ENCODE measurements at regions of chr6 and their contacts with region 1.

Region 1: GRCh38 chr6:149925974-149926777 is 3.3 kb upstream of the RAET1G start:
- DNase-seq: peak; percentile 91 to 93
- ATAC-seq: peak; percentile 93 to 95 (median 94)
- H3K4me3 ChIP-seq: peak overlapping the region; percentile 65
- H3K27ac ChIP-seq: no peak overlapping the region
- H3K4me1 ChIP-seq: no peaks in the 10 kb centered on the region
- H3K27me3 ChIP-seq: peaks cover 0 to 23% (median 4%) of the 10 kb centered on the region in 3 donors
- CTCF ChIP-seq: peak; percentile 82

Region 2: DNA sequence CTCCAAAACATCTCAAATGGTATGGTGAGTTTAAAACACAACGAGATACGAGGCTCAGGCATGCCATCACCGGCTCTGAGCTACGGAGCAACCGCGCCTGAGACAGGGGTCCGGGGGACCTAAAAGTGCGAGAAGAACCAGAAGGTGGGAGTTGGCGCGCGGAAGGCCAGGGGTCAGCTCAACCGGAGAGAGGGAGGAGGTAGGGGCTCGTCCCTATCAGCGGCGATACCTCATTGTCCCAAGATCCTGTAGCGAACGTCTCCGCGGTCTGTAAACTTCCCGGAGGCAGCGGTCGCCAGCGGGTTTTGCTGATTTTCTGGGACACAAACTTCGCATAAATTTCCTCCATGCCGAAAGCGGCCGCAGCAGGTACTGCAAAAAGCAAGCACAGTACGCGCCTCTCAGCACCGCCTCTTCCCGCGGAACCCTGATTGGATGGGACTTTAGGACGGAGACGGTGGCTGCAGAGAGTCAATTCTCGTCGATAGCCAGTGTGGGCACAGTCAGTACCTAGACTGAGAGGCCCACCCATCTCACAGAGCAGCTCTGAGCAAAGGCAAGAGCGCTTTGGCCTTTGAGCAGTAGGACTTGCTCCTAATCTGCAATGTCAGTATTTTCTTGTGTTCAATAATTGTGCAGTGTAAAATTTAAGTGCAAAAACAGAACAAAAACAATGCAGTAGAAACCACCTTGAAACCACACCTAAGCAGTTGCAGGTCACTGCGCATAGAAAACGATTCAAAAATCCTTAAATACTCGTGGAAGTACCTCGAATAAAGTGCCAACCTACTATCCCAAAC is 179.8 kb before region 1 on chr6 and contains the start of gene NUP43:
- intact Hi-C with region 1: loop called in 1 of 2 experiments (anchors 10 kb)
- DNase-seq: peak; percentile 95 to 97
- ATAC-seq: peak; percentile 68 to 76 (median 71)
- H3K4me3 ChIP-seq: peak within 1 kb of the TSS; percentile 78
- H3K27ac ChIP-seq: peak within 1 kb of the TSS; percentile 73
- H3K4me1 ChIP-seq: peaks cover 18% of the 10 kb centered on the region
- H3K27me3 ChIP-seq: no peaks in the 10 kb centered on the region
- CTCF ChIP-seq: peak; percentile 64
- total RNA-seq, gene NUP43: 17.4 to 26.8 (median 22.1) TPM

Region 3: DNA sequence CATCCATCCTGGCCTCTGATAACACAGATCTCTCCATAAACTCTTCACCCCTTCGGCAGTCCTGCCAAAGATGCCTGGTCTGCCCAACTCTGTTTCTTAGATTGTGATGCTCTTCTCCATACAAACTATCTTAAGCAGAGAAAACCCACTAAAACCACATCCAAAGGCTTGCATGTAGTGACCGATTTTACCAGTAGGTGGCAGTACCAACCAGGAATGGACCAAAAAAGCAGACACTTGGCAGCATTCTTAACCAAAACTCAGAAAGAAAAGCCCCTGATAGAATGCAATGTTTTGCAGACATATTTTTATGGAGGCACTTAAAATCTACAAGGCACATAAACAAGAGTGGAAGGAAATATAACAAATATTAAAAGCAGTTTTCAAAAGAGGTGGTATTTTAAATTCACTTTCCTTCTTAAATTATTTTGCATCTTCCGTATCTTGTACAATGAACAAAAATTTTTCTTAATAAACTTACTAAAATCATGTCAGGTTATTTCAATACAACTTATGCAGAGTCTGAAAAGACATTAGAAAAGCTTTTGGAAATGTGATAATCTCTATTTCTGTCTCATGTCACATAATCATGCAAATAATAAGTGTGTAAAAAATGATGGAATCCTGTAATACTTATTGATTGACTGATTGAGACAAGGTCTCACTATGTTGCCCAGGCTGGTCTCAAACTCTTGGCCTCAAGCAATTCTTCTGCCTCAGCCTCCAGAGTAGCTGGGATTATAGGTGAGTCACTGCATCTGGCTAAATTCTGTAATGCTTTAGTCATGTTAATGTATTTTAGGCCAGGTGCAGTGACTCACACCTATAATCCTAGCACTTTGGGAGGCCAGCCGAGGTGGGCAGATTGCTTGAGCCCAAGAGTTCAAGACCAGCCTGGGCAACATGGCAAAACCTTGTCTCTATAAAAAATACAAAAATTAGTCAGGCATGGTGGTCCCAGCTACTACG is 91.4 kb before region 1 on chr6:
- intact Hi-C with region 1: loop called (anchors 2 kb)
- DNase-seq: no peak
- ATAC-seq: peak; percentile 62 to 83 (median 76)
- H3K4me3 ChIP-seq: no peak overlapping the region
- H3K27ac ChIP-seq: no peak overlapping the region
- H3K4me1 ChIP-seq: no peaks in the 10 kb centered on the region
- H3K27me3 ChIP-seq: no peaks in the 10 kb centered on the region
- CTCF ChIP-seq: peak; percentile 94

Region 4: GRCh38 chr6:149840345-149841075 is 85.7 kb before region 1 on chr6:
- intact Hi-C with region 1: loop called (anchors 2 kb)
- DNase-seq: peak; percentile 80 to 90
- ATAC-seq: peak; percentile 91 to 95 (median 94)
- H3K4me3 ChIP-seq: no peak overlapping the region
- H3K27ac ChIP-seq: peak overlapping the region; percentile 12
- H3K4me1 ChIP-seq: peaks cover 8% of the 10 kb centered on the region
- H3K27me3 ChIP-seq: no peaks in the 10 kb centered on the region
- CTCF ChIP-seq: peak; percentile 74

Region 5: GRCh38 chr6:149884215-149884614 is 42.0 kb before region 1 on chr6:
- intact Hi-C with region 1: no loop called
- DNase-seq: no peak
- ATAC-seq: no peak
- H3K4me3 ChIP-seq: no peak overlapping the region
- H3K27ac ChIP-seq: no peak overlapping the region
- H3K4me1 ChIP-seq: peaks cover 14% of the 10 kb centered on the region
- H3K27me3 ChIP-seq: no peaks in the 10 kb centered on the region
- CTCF ChIP-seq: no peak

Region 6: GRCh38 chr6:149964308-149965193 is 38.4 kb after region 1 on chr6:
- intact Hi-C with region 1: no loop called
- DNase-seq: no peak
- ATAC-seq: peak in 1 of 4 donors; percentile 16
- H3K4me3 ChIP-seq: peak overlapping the region; percentile 64
- H3K27ac ChIP-seq: no peak overlapping the region
- H3K4me1 ChIP-seq: peaks cover 7% of the 10 kb centered on the region
- H3K27me3 ChIP-seq: peaks cover 0 to 85% (median 26%) of the 10 kb centered on the region in 3 donors
- CTCF ChIP-seq: no peak